ENCODE measurements at regions of chr16 and their contacts with region 1.

Region 1: DNA sequence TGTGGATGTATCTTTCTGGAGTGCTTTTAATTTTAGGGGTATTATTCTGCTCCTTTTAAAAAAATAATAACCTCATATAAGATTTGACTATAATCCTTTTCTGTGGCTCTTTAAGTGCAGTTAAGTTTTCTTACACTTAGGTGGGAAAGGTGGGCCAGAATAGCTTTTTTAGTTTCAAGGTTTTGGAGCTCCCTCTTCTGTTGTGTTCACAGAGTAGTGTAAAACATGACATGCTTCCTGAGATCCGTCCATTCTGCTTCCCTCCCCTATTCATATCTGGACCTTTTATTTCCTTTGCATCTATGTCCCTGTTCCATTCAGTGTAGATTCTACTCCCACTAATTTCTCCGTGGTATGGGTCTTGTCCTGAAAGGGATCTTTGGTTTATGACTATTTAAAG is 12.8 kb downstream of the LRRC36 start:
- DNase-seq: no peak
- H3K4me3 Mint-ChIP-seq: no peak overlapping the region
- H3K27ac Mint-ChIP-seq: no peak overlapping the region
- H3K4me1 Mint-ChIP-seq: no peaks in the 10 kb centered on the region
- H3K27me3 Mint-ChIP-seq: peaks cover 9% of the 10 kb centered on the region

Region 2: DNA sequence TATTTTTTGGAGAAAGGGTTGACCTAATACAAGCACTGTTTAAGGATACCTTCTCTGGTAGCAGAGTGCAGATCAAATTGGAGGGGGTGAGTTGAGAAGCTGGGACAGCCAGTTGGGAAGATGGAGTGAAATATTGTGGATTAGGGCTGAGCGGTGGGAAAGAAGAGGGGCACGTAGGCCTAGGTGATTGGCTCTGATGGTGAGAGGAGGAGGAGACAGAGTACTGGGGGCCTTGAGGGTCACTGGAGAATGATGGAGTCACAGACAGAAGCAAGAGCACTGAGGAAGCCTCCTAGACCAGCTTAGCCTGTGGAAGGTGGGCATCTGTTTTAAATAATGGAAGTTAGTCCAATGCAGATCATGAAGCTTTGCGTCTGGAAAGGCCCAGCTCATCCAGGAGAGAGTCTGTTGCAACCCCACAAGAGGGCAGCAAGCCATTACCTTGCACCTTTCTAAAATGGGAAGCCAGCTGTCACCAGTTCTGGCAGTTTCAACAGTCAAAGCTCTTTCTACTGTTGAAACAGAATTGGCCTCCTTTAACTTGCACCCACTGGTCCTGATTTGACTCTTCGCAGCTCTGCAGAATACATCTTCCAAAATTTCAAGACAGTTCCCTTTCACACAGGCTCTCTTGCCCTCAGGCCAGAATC is 78.9 kb before region 1 on chr16:
- CTCF ChIA-PET with region 1: interaction called, 13 read pairs
- DNase-seq: peak; percentile 59
- H3K4me3 Mint-ChIP-seq: no peak overlapping the region
- H3K27ac Mint-ChIP-seq: no peak overlapping the region
- H3K4me1 Mint-ChIP-seq: no peaks in the 10 kb centered on the region
- H3K27me3 Mint-ChIP-seq: peaks cover 46% of the 10 kb centered on the region

Region 3: DNA sequence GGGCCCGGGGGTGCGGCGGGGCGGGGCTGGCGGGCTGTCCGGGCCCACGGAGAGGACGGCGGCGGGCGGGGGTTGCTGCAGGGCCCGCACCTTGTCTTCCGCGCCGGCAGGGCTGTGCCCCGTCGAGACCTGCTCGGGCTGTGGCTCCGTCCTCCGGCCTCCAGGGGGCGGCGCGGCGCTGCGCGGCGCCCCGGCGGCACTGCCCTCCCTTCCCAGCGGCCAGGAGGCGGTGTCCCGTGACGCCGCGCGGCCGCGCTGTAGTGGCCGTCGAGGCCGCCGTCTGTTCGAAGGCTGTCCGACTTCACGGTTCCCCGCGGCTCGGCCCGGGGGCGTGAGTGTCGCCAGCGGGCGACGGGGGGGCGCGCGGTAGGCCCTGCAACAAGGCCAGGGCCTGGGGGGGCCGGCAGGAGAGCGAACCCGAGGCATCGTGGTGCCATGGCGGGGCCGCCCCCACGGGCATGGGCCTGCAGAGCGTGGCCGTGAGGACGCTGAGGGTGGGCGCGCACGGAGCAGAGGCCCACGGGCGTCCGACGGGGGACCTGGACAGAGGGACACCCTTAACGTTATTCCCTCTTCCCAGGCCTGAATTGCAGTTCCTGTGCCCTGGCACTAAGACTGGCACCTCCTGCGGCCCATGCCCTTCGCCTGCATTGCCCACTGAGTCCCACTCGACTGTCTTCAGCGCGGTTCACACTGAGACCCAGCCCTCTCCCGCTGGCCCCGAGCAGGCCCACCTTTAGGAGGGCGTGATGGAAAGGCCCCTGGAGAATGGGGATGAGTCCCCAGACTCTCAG is 60.0 kb before region 1 on chr16 and contains the start of gene PLEKHG4:
- CTCF ChIA-PET with region 1: interaction called, 12 read pairs
- DNase-seq: peak; percentile 87
- H3K4me3 Mint-ChIP-seq: peak within 1 kb of the TSS; percentile 81
- H3K27ac Mint-ChIP-seq: peak within 1 kb of the TSS; percentile 73
- H3K4me1 Mint-ChIP-seq: peaks cover 15% of the 10 kb centered on the region
- H3K27me3 Mint-ChIP-seq: no peaks in the 10 kb centered on the region

Region 4: DNA sequence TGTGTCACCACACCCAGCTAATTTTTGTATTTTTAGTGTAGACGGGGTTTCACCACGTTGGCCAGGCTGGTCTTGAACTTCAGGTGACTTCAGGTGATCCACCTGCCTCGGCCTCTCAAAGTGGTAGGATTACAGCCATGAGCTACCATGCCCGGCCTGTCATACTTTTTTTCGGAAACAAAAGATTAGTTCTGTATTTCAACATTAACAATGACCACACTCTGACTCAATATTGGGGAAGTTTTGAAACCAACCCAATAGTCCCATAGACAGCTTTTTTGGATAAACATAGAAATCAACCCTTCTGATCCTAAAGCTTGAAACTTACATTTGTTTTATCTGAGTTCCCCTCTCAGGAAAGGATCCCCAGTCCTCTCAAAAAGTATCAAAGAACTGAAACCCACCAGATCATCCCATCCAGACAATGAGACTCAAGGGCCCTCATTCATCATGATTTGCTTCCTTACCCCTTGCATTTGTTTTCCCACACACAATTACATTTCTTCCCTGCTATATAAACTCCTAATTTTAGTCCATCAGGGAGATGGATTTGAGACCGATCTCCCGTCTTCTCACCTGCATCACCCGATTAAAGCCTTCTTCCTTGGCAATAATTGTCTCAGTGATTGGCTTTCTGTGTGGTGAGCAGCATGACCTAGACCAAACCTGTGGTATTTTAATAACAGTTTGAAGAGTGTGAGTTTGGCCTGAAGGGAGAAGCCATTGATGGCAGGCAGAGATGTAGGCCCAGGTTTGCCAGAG is 151.1 kb after region 1 on chr16:
- CTCF ChIA-PET with region 1: no interaction called
- DNase-seq: no peak
- H3K4me3 Mint-ChIP-seq: no peak overlapping the region
- H3K27ac Mint-ChIP-seq: no peak overlapping the region
- H3K4me1 Mint-ChIP-seq: peaks cover 15% of the 10 kb centered on the region
- H3K27me3 Mint-ChIP-seq: no peaks in the 10 kb centered on the region

Measured in activated naive CD4-positive, alpha-beta T cell treated with anti-CD3 and anti-CD28 coated beads, Interleukin-2, amount 10 ng/mL, durations not matched to agents 7 days and 5 days (primary cell).